Left lung (tissue), 14 donors: ENCODE measurements at regions of chr3 and their contacts with region 1.

Region 1: GRCh38 chr3:65168547-65168946 is 480.7 kb upstream of the ADAMTS9 start:
- DNase-seq: no peak
- ATAC-seq: no peak
- H3K4me3 ChIP-seq: no peak overlapping the region
- H3K27ac ChIP-seq: peak overlapping the region in 1 of 2 donors; percentile 40
- H3K4me1 ChIP-seq: peaks cover 0 to 9% of the 10 kb centered on the region in 2 donors
- H3K27me3 ChIP-seq: no peaks in the 10 kb centered on the region
- CTCF ChIP-seq: no peak

Region 2: DNA sequence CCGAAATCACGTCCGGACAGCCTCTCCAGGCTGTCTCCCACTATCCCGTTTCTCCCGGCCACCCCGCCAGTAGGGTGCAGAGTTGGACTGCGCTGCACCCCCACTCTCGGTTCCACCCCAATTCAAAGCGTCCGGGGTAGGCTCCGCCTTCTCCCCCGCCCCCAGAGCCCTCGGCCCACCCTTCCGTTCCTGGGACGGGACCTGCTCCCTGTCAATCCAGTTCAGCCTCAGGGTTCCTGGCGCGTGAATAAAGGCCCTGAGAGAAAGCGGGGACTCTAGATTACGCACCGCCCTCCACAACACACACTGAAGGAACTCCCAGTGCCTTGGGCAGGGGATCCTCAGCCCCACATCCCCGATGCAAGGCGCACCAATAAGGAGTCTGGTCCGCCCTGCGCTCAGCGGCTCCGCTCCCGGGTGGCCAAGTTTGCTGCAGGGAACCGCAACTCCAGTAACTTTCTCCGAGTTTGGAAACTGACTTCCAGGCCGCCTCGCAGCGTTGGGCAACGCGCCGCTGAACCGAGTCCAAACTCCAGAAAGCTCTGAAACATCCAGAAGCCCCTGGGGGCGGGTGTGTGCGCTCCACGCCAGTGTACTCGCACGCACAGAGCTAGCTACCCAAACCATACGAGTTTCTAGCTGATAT is 482.6 kb before region 1 on chr3:
- intact Hi-C with region 1: loop called in 1 of 2 experiments (anchors 10 kb)
- DNase-seq: peak; percentile 92 to 97 (median 94)
- ATAC-seq: peak; percentile 86
- H3K4me3 ChIP-seq: peak overlapping the region; percentile 43 to 59
- H3K27ac ChIP-seq: peak overlapping the region; percentile 87 to 97
- H3K4me1 ChIP-seq: peaks cover 3 to 18% of the 10 kb centered on the region in 2 donors
- H3K27me3 ChIP-seq: peaks cover 0 to 42% of the 10 kb centered on the region in 2 donors
- CTCF ChIP-seq: no peak